ENCODE measurements at regions of chr17 and their contacts with region 1.

Region 1: GRCh38 chr17:42428141-42428944 is 5.3 kb upstream of the CAVIN1 start:
- DNase-seq: peak; percentile 50 to 62
- ATAC-seq: peak; percentile 87

Region 2: GRCh38 chr17:42517516-42517915 is 89.2 kb after region 1 on chr17:
- intact Hi-C with region 1: loop called (anchors 5 to 10 kb)
- DNase-seq: peak; percentile 88 to 93
- ATAC-seq: peak; percentile 73

Region 3: DNA sequence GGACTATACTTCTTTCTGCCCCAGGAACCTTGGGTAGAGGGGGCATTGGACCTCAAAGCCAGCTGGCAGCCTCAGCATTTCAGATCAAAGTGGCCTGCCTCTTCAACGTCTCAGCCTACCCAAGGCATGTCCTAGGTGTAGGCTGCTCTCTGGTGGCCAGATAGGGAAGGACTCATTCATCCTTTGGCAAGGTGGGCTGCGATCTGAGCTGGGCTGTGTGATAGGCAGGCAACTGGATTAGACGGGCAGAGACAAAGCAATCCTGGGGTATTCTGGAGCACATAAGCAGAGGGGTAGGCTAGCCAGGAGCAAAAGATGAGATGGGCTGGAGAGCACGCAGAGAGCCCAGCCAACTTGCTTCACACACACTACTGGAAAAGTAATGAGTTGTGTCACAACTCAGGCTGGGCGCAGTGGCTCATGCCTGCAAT is 98.9 kb after region 1 on chr17:
- intact Hi-C with region 1: loop called in 1 of 2 experiments (anchors 10 kb)
- DNase-seq: peak; percentile 68 to 81
- ATAC-seq: peak; percentile 66

Measured in left colon (tissue), 2 donors.